Gastrocnemius medialis (tissue), 4 donors: ENCODE measurements at regions of chr10 and their contacts with region 1.

Region 1: GRCh38 chr10:30591249-30591670 is 38.3 kb downstream of the LYZL2 start:
- DNase-seq: no peak
- ATAC-seq: peak; percentile 62 to 66
- H3K4me3 ChIP-seq: no peak overlapping the region
- H3K27ac ChIP-seq: no peak overlapping the region
- H3K4me1 ChIP-seq: no peaks in the 10 kb centered on the region
- H3K27me3 ChIP-seq: no peaks in the 10 kb centered on the region
- CTCF ChIP-seq: peak; percentile 73 to 81 (median 76)
- POLR2A ChIP-seq: no peak

Region 2: GRCh38 chr10:30231071-30231652 is 360.1 kb before region 1 on chr10:
- in situ Hi-C with region 1: no loop called
- intact Hi-C with region 1: no loop called
- DNase-seq: no peak
- ATAC-seq: no peak
- H3K4me3 ChIP-seq: no peak overlapping the region
- H3K27ac ChIP-seq: no peak overlapping the region
- H3K4me1 ChIP-seq: no peaks in the 10 kb centered on the region
- H3K27me3 ChIP-seq: no peaks in the 10 kb centered on the region
- CTCF ChIP-seq: no peak
- POLR2A ChIP-seq: no peak

Region 3: DNA sequence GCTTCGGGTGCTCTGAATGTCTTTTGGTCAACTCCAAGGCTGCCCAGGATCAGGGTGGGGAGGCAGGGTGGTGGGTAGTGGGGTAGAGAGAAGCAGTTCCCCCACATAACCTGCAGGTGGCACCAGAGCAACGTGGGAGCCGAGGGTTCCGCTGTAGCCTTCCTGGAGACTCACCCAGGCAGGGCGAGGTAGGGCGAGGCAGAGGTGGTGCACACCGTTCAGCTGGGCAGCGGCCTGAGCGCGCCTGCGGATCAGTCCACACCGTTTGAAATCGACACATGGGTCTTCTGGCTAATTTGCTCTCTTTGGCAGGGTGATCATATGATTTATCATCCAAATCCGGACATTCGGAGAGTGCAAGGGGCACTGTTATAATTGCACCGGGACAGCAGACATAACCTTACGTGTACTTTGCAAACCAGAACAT is 198.7 kb before region 1 on chr10:
- in situ Hi-C with region 1: loop called (anchors 5 to 10 kb)
- intact Hi-C with region 1: loop called (anchors 1 kb)
- DNase-seq: peak; percentile 41 to 52
- ATAC-seq: peak; percentile 94 to 97
- H3K4me3 ChIP-seq: peak overlapping the region in 2 of 4 donors; percentile 22 to 37
- H3K27ac ChIP-seq: no peak overlapping the region
- H3K4me1 ChIP-seq: peaks cover 0 to 3% of the 10 kb centered on the region in 2 donors
- H3K27me3 ChIP-seq: peaks cover 0 to 7% (median 0%) of the 10 kb centered on the region in 3 donors
- CTCF ChIP-seq: peak; percentile 80 to 99 (median 91)
- POLR2A ChIP-seq: no peak

Region 4: DNA sequence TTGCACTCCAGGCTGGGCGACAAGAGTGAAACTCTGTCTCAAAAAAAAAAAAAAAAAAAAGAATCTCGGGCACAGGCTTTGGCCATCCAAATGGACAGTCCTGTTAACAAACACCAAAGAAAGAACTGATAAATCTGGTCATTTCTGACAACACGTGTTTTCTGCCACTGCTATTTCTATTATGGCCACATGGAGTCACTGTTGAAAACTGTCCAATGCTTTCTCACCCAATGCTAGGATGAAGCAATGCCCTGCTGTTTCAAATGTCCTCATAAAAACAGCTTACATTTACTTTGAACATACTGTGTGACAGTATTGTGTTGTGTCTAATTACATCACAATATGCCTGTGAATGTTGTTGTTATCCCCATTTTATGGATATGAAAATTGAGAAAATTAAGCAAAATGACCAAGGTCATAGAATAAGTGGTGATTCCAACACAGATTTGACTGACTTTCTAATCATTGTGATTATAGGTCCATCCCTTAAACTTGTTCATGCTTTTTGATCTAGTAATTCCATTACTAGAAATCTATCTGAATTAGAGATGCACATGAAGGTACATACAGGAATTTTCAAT is 177.2 kb before region 1 on chr10:
- in situ Hi-C with region 1: no loop called
- intact Hi-C with region 1: loop called (anchors 5 kb)
- DNase-seq: peak in 1 of 2 donors; percentile 27
- ATAC-seq: peak; percentile 92 to 94
- H3K4me3 ChIP-seq: no peak overlapping the region
- H3K27ac ChIP-seq: no peak overlapping the region
- H3K4me1 ChIP-seq: peaks cover 0 to 4% of the 10 kb centered on the region in 2 donors
- H3K27me3 ChIP-seq: no peaks in the 10 kb centered on the region
- CTCF ChIP-seq: peak; percentile 77 to 86 (median 82)
- POLR2A ChIP-seq: no peak

Region 5: GRCh38 chr10:31133628-31134302 is 542.5 kb after region 1 on chr10:
- in situ Hi-C with region 1: no loop called
- intact Hi-C with region 1: no loop called
- DNase-seq: peak; percentile 58 to 76
- ATAC-seq: peak; percentile 82 to 88
- H3K4me3 ChIP-seq: peak overlapping the region; percentile 63 to 94 (median 68)
- H3K27ac ChIP-seq: peak overlapping the region; percentile 90 to 94 (median 93)
- H3K4me1 ChIP-seq: peaks cover 4 to 13% of the 10 kb centered on the region in 2 donors
- H3K27me3 ChIP-seq: no peaks in the 10 kb centered on the region
- CTCF ChIP-seq: no peak
- POLR2A ChIP-seq: peak; percentile 74